ENCODE measurements at regions of chr3 and their contacts with region 1.

Region 1: DNA sequence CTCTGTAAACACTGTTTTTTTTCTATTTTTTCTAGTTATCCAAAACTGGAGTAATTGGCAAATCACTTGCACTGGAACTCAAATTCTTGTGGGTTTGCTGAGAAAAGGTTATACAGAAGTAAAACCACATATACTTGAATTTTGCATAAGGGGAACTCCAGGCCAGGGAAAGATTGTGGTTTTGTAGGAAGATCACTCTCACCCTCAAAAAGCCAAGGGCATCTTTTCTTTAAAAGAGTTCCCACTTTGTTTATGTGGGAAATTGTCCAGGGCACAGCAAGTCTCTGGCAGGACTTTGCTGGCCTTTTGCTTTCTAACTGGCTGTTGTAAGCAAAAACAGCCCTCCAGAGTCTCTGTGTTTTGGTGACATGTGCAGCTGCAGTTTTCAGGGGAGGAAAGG is 340.3 kb upstream of the RBMS3 start:
- DNase-seq: no peak
- H3K4me3 Mint-ChIP-seq: peak overlapping the region; percentile 32
- H3K27ac Mint-ChIP-seq: peak overlapping the region; percentile 37
- H3K4me1 Mint-ChIP-seq: peaks cover 38% of the 10 kb centered on the region
- H3K27me3 Mint-ChIP-seq: peaks cover 17% of the 10 kb centered on the region

Region 2: GRCh38 chr3:28700728-28701127 is 239.8 kb before region 1 on chr3:
- intact Hi-C with region 1: no loop called
- DNase-seq: no peak
- H3K4me3 Mint-ChIP-seq: no peak overlapping the region
- H3K27ac Mint-ChIP-seq: no peak overlapping the region
- H3K4me1 Mint-ChIP-seq: no peaks in the 10 kb centered on the region
- H3K27me3 Mint-ChIP-seq: no peaks in the 10 kb centered on the region

Region 3: DNA sequence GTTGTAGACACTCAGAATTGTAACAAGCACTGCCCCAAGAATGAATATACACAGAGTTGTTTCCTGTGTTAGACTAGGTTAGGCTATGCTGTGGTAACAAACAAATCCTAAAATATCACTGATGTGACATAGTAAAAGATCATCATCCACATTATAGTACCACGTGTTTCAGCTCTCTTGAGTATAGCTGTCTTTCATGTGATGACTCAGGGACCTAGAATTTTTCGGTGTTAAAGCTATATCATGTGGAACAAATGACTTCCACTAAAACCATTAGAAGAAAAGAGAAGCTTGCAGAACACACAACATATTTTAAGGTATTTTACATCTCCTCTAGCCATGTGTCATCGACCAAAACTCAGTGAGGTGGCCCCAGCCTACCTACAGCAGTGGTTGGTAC is 32.4 kb after region 1 on chr3:
- intact Hi-C with region 1: loop called (anchors 2 kb)
- DNase-seq: no peak
- H3K4me3 Mint-ChIP-seq: no peak overlapping the region
- H3K27ac Mint-ChIP-seq: no peak overlapping the region
- H3K4me1 Mint-ChIP-seq: peaks cover 14% of the 10 kb centered on the region
- H3K27me3 Mint-ChIP-seq: peaks cover 2% of the 10 kb centered on the region

Measured in activated T-helper 1 cell treated with anti-CD3 and anti-CD28 coated beads, Interleukin-12 subunit alpha, Interleukin-12 subunit beta, Interleukin-2, Interleukin-4 antibody, amounts not matched to agents 30 ng/mL and 10 ng/mL and 1 ng/mL, durations not matched to agents 14 hours and 24 hours and 36 hours (primary cell).